ENCODE measurements at regions of chr9 and their contacts with region 1.

Region 1: GRCh38 chr9:91611630-91612029 is 188.0 kb upstream of the NFIL3 start:
- DNase-seq: no peak
- H3K4me3 ChIP-seq: no peak overlapping the region
- H3K27ac ChIP-seq: no peak overlapping the region
- H3K4me1 ChIP-seq: no peaks in the 10 kb centered on the region
- H3K27me3 ChIP-seq: no peaks in the 10 kb centered on the region
- CTCF ChIP-seq: no peak
- POLR2A ChIP-seq: no peak

Region 2: DNA sequence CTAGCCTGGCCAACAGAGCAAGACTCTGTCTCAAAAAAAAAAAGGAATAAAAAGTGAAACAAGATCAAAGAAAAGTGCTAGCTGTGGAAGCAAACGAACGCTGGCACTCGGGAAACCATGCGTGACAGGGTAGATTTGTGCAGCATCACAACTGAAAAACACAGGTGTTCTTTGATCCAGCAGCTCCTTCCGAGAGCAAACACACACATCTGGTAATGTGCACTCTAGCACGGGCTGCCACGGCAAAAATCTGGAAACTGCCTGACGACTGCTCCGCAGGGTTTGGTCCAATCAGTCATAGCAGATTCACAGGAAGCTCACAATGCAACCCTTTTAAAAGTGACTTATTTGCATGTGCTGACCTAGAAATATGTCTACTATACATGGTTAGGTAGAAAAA is 730.0 kb before region 1 on chr9:
- intact Hi-C with region 1: loop called (anchors 5 kb)
- DNase-seq: no peak
- H3K4me3 ChIP-seq: no peak overlapping the region
- H3K27ac ChIP-seq: no peak overlapping the region
- H3K4me1 ChIP-seq: no peaks in the 10 kb centered on the region
- H3K27me3 ChIP-seq: no peaks in the 10 kb centered on the region
- CTCF ChIP-seq: no peak
- POLR2A ChIP-seq: no peak

Measured in breast epithelium (tissue), 4 donors.